ENCODE measurements at regions of chr17 and their contacts with region 1.

Region 1: DNA sequence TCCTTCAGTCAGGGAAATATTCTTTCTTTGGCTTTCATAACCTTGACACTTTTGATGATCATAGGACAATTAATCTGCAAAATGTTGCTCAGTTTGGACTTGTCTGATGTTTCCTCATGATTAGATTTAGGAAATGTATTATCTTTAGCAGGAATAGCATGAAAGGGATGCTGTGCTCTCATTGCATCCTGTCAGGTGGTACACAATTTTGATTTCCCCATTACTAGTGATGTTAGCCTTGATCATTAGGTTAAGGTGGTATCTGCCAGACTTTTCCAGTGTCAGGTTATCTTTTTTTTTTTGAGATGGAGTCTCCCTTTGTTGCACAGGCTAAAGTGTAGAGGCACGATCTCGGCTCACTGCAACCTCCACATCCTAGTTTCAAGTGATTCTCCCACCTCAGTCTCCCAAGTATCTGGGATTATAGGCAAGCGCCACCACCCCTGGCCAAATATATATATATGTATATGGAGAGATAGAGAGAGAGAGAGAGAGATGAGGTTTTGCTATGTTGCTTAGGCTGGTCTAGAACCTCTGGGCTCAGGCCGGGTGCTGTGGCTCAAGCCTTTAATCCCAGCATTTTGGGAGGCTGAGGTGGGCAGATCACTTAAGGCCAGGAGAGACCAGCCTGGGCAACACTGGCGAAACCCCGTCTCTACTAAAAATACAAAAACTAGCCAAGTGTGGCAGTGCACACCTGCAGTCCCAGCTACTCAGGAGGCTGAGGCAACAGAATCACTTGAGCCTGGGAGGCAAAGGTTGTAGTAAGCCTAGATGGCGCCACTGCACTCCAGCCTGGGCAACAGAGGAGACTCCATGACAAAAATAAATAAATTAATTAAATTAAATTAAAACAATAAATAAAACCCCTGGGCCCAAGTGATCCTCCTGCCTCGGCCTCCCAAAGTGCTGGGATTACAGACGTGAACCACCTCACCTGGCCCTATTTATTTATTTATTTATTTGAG is 15.8 kb upstream of the CAVIN1 start:
- DNase-seq: no peak
- H3K4me3 ChIP-seq: no peak overlapping the region
- H3K27ac ChIP-seq: no peak overlapping the region
- H3K4me1 ChIP-seq: peaks cover 0 to 5% (median 0%) of the 10 kb centered on the region in 4 experiments; a peak in 1 of 7 replicates
- H3K27me3 ChIP-seq: no peaks in the 10 kb centered on the region
- CTCF ChIP-seq: peak; percentile 32 to 47 (median 46)
- EP300 ChIP-seq: no peak
- POLR2A ChIP-seq: no peak
- RAD21 ChIP-seq: peak; percentile 25 to 44; a peak in 3 of 4 replicates

Region 2: GRCh38 chr17:42212382-42212781 is 226.5 kb before region 1 on chr17:
- CTCF ChIA-PET with region 1: no interaction called
- POLR2A ChIA-PET with region 1: no interaction called
- DNase-seq: no peak
- H3K4me3 ChIP-seq: no peak overlapping the region
- H3K27ac ChIP-seq: no peak overlapping the region
- H3K4me1 ChIP-seq: no peaks in the 10 kb centered on the region
- H3K27me3 ChIP-seq: no peaks in the 10 kb centered on the region
- CTCF ChIP-seq: no peak
- EP300 ChIP-seq: no peak
- POLR2A ChIP-seq: no peak
- RAD21 ChIP-seq: no peak

Region 3: DNA sequence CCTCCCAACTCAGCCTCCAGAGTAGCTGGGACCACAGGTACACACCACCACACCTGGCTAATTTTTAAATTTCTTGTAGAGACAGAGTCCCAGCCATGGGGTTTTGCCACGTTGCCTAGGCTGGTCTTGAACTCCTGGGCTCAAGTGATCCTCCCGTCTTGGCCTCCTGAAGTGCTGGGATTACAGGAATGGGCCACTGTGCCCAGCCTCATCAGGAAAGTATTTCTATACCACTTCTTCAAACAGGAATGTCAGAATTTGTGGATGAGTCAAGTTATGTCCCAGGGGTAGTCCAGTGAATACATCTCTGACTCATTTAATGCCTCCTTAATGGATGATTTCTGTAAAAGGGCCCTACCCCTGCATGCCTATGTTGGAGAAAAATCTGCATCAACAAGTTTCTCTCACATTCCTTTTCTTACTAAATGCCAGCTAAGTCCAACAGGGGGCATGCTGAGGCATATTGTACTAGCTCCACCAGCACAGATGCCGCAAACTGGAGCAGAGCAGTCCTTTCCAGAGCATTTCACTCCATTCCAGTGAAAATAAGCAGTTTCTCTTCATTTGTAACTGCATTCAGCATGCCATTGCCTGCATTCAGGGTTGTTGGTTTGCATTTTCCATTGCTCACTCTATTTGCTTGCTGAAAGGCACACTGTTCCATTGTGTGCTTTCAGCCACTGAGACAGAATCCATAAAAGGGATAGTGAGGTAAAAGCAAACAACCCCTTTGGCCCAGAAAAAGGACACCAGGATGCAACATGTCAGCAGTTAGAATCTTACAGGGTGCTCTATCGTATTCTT is 10.5 kb before region 1 on chr17:
- CTCF ChIA-PET with region 1: interaction called, 46 read pairs
- POLR2A ChIA-PET with region 1: interaction called, 17 read pairs
- DNase-seq: no peak
- H3K4me3 ChIP-seq: no peak overlapping the region
- H3K27ac ChIP-seq: peak overlapping the region; percentile 65
- H3K4me1 ChIP-seq: peaks cover 0 to 4% (median under 1%) of the 10 kb centered on the region in 4 experiments; a peak in 3 of 7 replicates
- H3K27me3 ChIP-seq: no peaks in the 10 kb centered on the region
- CTCF ChIP-seq: peak; percentile 48 to 84 (median 56)
- EP300 ChIP-seq: no peak
- POLR2A ChIP-seq: no peak
- RAD21 ChIP-seq: peak; percentile 55 to 65

Measured in H1 (cell line).